ENCODE measurements at regions of chr5 and their contacts with region 1.

Region 1: DNA sequence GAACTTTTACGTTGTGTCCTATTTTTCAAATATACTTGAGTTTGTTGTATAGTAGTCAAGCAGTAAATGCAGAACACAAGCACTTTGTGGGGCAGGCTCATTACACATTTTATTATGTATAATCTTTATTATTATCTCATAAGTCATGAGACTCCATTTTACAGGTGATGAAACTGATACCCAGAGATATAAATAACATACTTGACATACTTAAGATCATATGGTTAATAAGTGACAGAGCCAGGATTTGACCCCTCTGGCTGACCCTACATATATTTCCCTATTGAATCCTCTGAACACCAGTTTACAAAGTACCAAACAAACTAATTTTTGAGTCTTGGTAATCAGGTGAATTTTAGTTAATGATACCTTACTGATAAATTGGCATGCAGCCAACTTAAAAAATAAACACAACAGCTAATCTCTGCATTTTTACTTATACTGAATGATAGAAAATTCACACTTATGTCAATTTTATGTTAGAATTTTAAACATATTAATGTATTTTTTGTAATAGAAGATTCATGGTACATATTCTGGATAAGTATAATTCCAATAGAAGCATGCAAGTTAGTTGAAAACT is 305.0 kb upstream of the MEF2C start:
- DNase-seq: no peak
- H3K4me3 ChIP-seq: no peak overlapping the region
- H3K27ac ChIP-seq: no peak overlapping the region
- H3K4me1 ChIP-seq: no peaks in the 10 kb centered on the region
- H3K27me3 ChIP-seq: no peaks in the 10 kb centered on the region
- CTCF ChIP-seq: no peak
- POLR2A ChIP-seq: no peak

Region 2: DNA sequence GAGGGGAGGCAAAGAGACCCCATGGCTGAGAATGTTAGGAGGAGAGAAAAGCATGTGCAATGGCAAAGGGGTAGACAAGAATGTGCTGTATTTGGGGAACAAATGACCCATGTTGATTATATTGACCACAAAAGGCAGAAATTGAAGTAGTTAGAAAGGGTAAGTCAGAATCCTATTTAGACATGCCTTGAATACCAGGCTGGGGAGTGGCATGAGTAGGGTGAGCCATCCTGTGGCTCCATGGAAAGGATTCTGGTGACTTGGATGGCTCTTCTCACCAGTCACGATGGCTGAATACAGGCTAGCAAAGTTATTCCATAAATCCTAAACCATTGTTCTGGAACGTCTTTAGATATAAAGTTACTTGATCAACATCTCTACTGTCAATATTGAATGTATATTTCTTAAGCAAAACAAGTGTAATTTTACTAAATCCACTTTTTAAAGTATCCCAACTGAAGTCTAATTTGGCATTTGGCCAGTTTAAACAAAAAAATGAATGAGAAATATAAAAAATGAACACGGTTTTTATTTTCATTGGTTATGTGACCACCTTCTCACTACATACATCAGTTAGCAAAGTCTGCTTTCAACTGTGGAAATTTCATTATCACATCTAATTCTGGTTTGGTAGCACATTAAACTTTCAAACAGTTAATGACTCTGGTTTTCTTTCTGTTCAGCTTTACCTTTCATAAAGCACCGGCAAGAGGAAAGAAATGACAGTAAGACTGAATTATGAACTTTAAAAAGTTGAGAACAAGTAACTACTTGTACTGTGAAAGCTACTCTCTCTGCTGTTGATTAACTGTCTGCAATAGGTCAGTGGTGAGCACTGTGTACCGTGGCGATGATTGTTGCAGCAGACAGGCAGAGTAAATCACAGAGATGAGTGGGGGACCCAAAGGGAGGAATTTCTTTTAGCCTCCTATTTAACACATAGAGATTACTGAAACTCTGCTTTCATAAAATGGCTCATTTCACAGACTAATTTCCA is 231.3 kb before region 1 on chr5:
- intact Hi-C with region 1: loop called (anchors 5 kb)
- DNase-seq: no peak
- H3K4me3 ChIP-seq: no peak overlapping the region
- H3K27ac ChIP-seq: no peak overlapping the region
- H3K4me1 ChIP-seq: no peaks in the 10 kb centered on the region
- H3K27me3 ChIP-seq: no peaks in the 10 kb centered on the region
- CTCF ChIP-seq: no peak
- POLR2A ChIP-seq: no peak

Region 3: GRCh38 chr5:89200899-89201298 is 12.9 kb after region 1 on chr5:
- intact Hi-C with region 1: loop called (anchors 1 kb)
- DNase-seq: no peak
- H3K4me3 ChIP-seq: no peak overlapping the region
- H3K27ac ChIP-seq: no peak overlapping the region
- H3K4me1 ChIP-seq: no peaks in the 10 kb centered on the region
- H3K27me3 ChIP-seq: no peaks in the 10 kb centered on the region
- CTCF ChIP-seq: no peak
- POLR2A ChIP-seq: no peak